Panc1 (cell line): ENCODE measurements at regions of chrX and their contacts with region 1.

Region 1: GRCh38 chrX:132883358-132883915 is 75.0 kb downstream of the HS6ST2 start:
- DNase-seq: no peak
- ATAC-seq: no peak
- H3K4me3 ChIP-seq: no peak overlapping the region
- H3K27ac ChIP-seq: no peak overlapping the region
- H3K4me1 ChIP-seq: no peaks in the 10 kb centered on the region
- H3K27me3 ChIP-seq: no peaks in the 10 kb centered on the region
- CTCF ChIP-seq: no peak

Region 2: GRCh38 chrX:132900633-132901293 is 17.3 kb after region 1 on chrX:
- CTCF ChIA-PET with region 1: no interaction called
- POLR2A ChIA-PET with region 1: no interaction called
- in situ Hi-C with region 1: no loop called
- intact Hi-C with region 1: no loop called
- DNase-seq: no peak
- ATAC-seq: no peak
- H3K4me3 ChIP-seq: no peak overlapping the region
- H3K27ac ChIP-seq: no peak overlapping the region
- H3K4me1 ChIP-seq: no peaks in the 10 kb centered on the region
- H3K27me3 ChIP-seq: no peaks in the 10 kb centered on the region
- CTCF ChIP-seq: no peak

Region 3: DNA sequence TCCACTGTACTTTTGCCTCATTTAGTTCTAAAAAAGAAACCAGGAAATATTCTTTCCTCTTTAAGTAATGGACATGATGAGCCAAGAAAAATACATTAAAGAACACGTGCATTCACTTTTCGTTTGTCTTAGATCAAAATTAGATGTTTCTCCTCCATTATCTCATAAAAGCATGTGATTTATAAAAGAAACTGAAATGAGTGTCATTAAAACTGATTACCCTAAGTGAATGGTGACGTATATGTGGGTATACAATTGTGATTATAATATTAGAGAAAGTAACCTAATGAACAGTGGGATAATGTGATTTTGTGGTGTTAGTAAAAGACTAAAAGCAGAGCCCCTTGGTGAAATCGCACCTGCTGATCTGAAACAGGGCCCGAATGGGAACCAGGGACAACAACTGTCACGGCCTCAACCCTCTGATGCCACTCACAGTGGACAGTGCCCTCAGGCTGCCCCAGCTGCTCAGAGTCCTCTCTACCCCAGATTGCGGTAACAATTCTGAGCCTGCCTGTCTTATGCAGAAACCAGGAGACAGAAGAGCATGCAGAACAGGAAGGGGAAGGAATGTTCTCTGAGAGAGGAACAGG is 100.7 kb after region 1 on chrX:
- CTCF ChIA-PET with region 1: interaction called, 10 read pairs
- POLR2A ChIA-PET with region 1: no interaction called
- in situ Hi-C with region 1: no loop called
- intact Hi-C with region 1: no loop called
- DNase-seq: no peak
- ATAC-seq: no peak
- H3K4me3 ChIP-seq: no peak overlapping the region
- H3K27ac ChIP-seq: no peak overlapping the region
- H3K4me1 ChIP-seq: no peaks in the 10 kb centered on the region
- H3K27me3 ChIP-seq: no peaks in the 10 kb centered on the region
- CTCF ChIP-seq: no peak